BJ (cell line): ENCODE measurements at regions of chr2 and their contacts with region 1.

Region 1: GRCh38 chr2:172972005-172972619 is 103.5 kb upstream of the MAP3K20 start:
- DNase-seq: no peak
- H3K4me3 ChIP-seq: no peak overlapping the region
- H3K27me3 ChIP-seq: no peaks in the 10 kb centered on the region; the same call in 1 of the 2 replicates
- CTCF ChIP-seq: peak; percentile 85

Region 2: GRCh38 chr2:172031536-172031935 is 940.6 kb before region 1 on chr2:
- CTCF ChIA-PET with region 1: no interaction called
- POLR2A ChIA-PET with region 1: no interaction called
- DNase-seq: no peak
- H3K4me3 ChIP-seq: no peak overlapping the region
- H3K27me3 ChIP-seq: no peaks in the 10 kb centered on the region
- CTCF ChIP-seq: no peak

Region 3: GRCh38 chr2:172888714-172889669 is 83.1 kb before region 1 on chr2:
- CTCF ChIA-PET with region 1: no interaction called
- POLR2A ChIA-PET with region 1: no interaction called
- DNase-seq: no peak
- H3K4me3 ChIP-seq: no peak overlapping the region
- H3K27me3 ChIP-seq: peaks cover 9% of the 10 kb centered on the region
- CTCF ChIP-seq: no peak

Region 4: DNA sequence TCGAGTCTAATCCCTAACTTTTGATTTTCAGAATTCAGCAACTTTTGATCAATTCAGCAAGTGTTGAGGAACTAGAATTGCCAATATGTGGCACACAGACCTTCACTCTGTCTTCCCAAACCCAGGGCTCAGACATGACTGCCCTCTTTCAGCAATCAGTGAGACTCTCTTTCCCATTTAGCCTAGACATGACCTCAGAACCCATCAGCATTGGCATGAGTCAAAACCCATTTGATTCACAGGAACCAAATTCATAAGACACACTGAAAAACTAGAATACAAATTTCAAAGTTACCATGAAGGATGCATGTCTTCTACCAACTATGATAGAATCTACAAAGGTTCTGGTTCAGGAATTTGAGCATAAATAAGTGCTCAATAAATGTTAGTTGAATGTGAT is 10.0 kb before region 1 on chr2:
- CTCF ChIA-PET with region 1: interaction called, 13 read pairs
- POLR2A ChIA-PET with region 1: no interaction called
- DNase-seq: no peak
- H3K4me3 ChIP-seq: no peak overlapping the region
- H3K27me3 ChIP-seq: no peaks in the 10 kb centered on the region
- CTCF ChIP-seq: no peak

Region 5: GRCh38 chr2:172985139-172985901 is 13.2 kb after region 1 on chr2:
- CTCF ChIA-PET with region 1: interaction called, 12 read pairs
- POLR2A ChIA-PET with region 1: no interaction called
- DNase-seq: no peak
- H3K4me3 ChIP-seq: no peak overlapping the region
- H3K27me3 ChIP-seq: no peaks in the 10 kb centered on the region
- CTCF ChIP-seq: no peak

Region 6: DNA sequence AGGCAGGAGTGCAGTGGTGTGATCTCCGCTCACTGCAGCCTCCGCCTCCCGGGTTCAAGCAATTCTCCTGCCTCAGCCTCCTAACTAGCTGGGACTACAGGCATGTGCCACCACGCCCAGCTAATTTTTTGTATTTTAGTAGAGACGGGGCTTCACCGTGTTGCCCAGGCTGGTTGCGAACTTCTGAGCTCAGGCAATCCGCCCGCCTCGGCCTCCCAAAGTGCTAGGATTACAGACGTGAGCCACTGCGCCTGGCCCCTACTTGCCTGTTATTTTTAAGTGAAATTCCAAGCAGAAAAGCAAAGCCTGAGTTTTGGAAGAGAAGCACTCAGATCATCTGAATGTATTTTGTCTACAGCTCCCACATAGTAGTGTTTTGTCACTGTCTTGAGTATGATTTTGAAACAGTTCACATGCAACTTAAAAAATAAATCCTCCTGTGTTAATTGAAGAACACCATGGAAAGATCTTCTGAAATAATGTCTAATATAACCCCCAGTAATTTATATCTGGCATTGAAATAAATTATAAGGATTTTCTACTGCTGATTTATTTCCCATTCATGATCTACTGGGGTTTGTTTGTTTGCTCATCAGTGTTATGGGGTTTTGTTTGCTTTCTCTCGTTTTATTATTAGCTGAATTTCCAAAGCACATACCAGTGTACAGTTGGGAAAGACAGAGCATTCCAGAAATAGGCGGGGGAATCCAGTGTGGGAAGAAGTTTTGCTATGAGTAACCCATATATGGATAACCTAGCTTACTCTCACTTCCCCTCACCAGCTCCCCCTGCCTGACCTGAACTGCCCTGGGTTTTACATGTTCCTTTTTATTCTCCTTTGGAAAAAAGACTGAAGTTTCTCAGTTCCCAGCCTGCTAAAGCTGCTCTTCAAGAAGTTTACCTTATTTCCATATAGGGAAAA is 23.5 kb after region 1 on chr2:
- CTCF ChIA-PET with region 1: interaction called, 12 read pairs
- POLR2A ChIA-PET with region 1: no interaction called
- DNase-seq: peak; percentile 93
- H3K4me3 ChIP-seq: no peak overlapping the region
- H3K27me3 ChIP-seq: no peaks in the 10 kb centered on the region
- CTCF ChIP-seq: no peak

Region 7: GRCh38 chr2:173021939-173022371 is 49.8 kb after region 1 on chr2:
- CTCF ChIA-PET with region 1: interaction called, 18 read pairs
- POLR2A ChIA-PET with region 1: no interaction called
- DNase-seq: no peak
- H3K4me3 ChIP-seq: no peak overlapping the region
- H3K27me3 ChIP-seq: no peaks in the 10 kb centered on the region
- CTCF ChIP-seq: peak; percentile 57